ENCODE measurements at regions of chr1 and their contacts with region 1.

Region 1: GRCh38 chr1:59076612-59077011 is 220.3 kb upstream of the FGGY start:
- DNase-seq: peak; percentile 23
- H3K4me3 ChIP-seq: no peak overlapping the region
- H3K27ac ChIP-seq: no peak overlapping the region
- H3K4me1 ChIP-seq: peaks cover 30% of the 10 kb centered on the region
- H3K27me3 ChIP-seq: peaks cover 22% of the 10 kb centered on the region
- CTCF ChIP-seq: peak; percentile 45; the same call in 1 of the 2 replicates

Region 2: DNA sequence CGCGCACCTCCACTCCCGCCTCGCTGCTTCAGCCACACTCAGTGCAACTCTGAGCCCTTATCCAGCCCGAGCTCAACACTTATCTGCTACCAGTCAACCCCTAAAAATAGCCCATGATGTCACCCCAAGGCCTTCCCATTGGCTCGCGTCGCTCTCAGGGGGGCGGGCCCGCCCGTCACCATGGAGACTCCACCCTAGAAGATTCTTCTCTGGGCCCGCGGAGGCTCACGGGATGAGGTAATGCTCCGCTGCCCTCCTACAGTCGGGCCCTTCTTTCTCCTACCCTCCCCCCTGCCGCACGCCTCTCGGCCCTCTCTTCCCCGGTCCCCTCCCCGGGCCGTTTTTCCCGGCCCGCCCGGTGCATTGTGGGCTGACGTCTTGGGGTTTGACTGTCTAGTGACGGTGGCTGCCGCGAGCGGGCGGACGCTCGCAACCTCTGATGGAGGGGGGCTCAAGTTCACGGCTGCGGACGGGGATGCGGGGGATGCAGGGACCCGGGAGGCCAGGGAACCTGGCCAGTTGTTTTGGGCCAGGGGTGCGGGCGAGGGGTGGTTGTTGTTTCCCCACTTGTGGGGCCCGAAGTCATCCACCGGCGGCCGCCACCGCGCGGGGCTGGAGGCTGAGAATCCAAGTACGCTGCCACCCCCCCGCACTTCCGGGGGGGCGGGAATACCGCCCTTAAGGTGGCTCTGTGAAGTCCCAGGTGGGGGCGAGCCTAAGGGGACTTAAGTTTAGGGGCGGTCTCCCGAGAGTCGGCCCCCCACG is 292.4 kb before region 1 on chr1 and contains the start of gene JUN:
- CTCF ChIA-PET with region 1: no interaction called
- POLR2A ChIA-PET with region 1: no interaction called
- intact Hi-C with region 1: loop called (anchors 5 kb)
- DNase-seq: peak; percentile 99
- H3K4me3 ChIP-seq: peak within 1 kb of the TSS; percentile 63
- H3K27ac ChIP-seq: peak within 1 kb of the TSS; percentile 87
- H3K4me1 ChIP-seq: peaks cover 32% of the 10 kb centered on the region
- H3K27me3 ChIP-seq: peaks cover 3% of the 10 kb centered on the region
- CTCF ChIP-seq: no peak
- total RNA-seq, gene JUN: 16.9 and 24.9 TPM in 2 replicates

Region 3: DNA sequence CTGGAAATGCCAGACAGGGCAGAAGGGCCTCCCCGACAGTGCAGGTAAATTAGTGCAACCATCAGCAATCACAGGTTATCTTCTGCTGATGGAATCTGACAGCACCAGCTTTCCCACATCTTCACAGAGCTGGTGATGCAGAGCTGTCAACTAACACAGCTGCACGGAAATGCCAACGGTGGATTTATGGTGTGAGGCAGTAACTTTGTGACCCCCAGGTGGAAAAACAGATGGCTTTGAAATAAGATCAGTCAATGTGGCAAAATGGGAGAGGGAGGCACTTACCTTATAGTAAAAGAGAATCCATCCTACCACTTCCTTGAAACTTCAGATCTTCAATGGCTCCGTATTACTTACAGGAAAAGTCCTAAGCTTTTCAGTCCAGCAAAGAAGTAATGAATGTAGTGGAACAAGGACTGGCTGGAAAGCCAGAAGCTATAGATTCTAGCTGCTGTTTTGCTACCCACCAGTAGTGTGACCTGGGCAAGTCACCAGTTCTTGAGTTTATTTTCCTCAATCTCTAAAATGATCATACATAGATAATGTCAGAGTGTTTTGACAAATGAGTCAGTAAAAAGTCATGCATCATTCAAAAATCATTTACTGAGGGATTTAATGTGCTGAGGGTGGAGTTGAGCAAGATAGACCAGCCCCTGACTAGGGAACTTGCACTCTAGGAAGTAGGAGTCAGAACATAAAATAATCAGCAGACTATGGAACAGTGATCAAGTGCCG is 47.0 kb before region 1 on chr1:
- CTCF ChIA-PET with region 1: no interaction called
- POLR2A ChIA-PET with region 1: no interaction called
- intact Hi-C with region 1: no loop called
- DNase-seq: no peak
- H3K4me3 ChIP-seq: no peak overlapping the region
- H3K27ac ChIP-seq: no peak overlapping the region
- H3K4me1 ChIP-seq: no peaks in the 10 kb centered on the region
- H3K27me3 ChIP-seq: no peaks in the 10 kb centered on the region
- CTCF ChIP-seq: no peak

Region 4: GRCh38 chr1:59266180-59266926 is 189.7 kb after region 1 on chr1:
- CTCF ChIA-PET with region 1: no interaction called
- POLR2A ChIA-PET with region 1: no interaction called
- intact Hi-C with region 1: loop called (anchors 10 kb)
- DNase-seq: no peak
- H3K4me3 ChIP-seq: no peak overlapping the region
- H3K27ac ChIP-seq: no peak overlapping the region
- H3K4me1 ChIP-seq: peaks cover 10% of the 10 kb centered on the region
- H3K27me3 ChIP-seq: peaks cover 91% of the 10 kb centered on the region
- CTCF ChIP-seq: no peak

Measured in A673 (cell line).